ENCODE measurements at regions of chr20 and their contacts with region 1.

Region 1: GRCh38 chr20:33653218-33653899 is 8.8 kb upstream of the C20orf144 start:
- DNase-seq: peak; percentile 88
- H3K4me3 ChIP-seq: peak overlapping the region in 1 of 2 experiments; percentile 23; a peak in 1 of 4 replicates
- H3K27ac ChIP-seq: peak overlapping the region in 1 of 2 experiments; percentile 17; a peak in 1 of 4 replicates
- H3K4me1 ChIP-seq: peaks cover 1 to 39% of the 10 kb centered on the region in 2 experiments; a peak in 2 of 4 replicates
- H3K27me3 ChIP-seq: no peaks in the 10 kb centered on the region
- CTCF ChIP-seq: peak; percentile 82
- EP300 ChIP-seq: no peak
- RAD21 ChIP-seq: peak; percentile 96

Region 2: GRCh38 chr20:33450867-33451266 is 202.5 kb before region 1 on chr20:
- CTCF ChIA-PET with region 1: interaction called, 25 read pairs
- POLR2A ChIA-PET with region 1: interaction called, 3 read pairs
- DNase-seq: no peak
- H3K4me3 ChIP-seq: no peak overlapping the region
- H3K27ac ChIP-seq: no peak overlapping the region
- H3K4me1 ChIP-seq: no peaks in the 10 kb centered on the region; a peak in 1 of 4 replicates
- H3K27me3 ChIP-seq: no peaks in the 10 kb centered on the region
- CTCF ChIP-seq: no peak
- EP300 ChIP-seq: no peak
- RAD21 ChIP-seq: no peak

Region 3: DNA sequence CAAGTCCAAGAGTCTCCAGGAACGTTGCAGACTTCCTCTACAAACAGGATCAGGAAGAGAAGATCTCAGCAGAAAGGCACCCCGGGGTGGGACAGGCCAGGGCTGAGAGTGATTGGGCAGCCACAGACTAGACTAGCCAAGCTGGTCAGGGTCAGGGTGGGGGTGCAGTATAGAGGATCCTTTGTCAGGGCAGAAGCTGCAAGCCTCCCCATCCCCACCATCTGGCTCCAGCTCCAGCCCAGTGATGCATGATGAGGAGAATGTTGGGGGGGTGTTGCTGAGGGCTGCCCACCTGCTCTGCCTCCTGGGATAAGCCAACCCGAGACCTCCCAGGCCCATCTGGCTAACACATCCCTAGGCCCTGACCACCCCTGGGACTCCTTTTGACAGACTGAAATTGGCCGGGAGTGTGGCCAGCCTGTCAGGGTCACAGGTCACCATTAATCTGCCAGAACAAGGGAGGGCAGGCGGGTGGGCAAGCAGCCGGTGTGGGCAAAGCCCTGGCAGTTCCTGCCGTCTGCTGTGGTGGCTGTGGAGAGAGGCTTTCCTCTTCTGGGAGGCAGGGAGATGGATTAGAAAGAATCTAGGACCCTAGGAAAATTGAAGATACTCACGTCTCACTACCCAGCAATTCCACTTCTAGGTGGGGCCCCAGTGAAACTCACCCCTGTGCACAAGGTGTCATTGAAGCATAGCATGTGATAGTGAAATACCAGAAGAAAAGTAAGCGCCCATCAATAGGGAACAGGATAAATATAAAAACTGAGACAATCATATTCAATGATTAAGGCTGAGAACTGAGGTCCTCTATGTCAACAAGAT is 187.7 kb before region 1 on chr20:
- CTCF ChIA-PET with region 1: interaction called, 24 read pairs
- POLR2A ChIA-PET with region 1: interaction called, 3 read pairs
- DNase-seq: no peak
- H3K4me3 ChIP-seq: no peak overlapping the region
- H3K27ac ChIP-seq: no peak overlapping the region
- H3K4me1 ChIP-seq: peaks cover 0 to 6% of the 10 kb centered on the region in 2 experiments; a peak in 1 of 4 replicates
- H3K27me3 ChIP-seq: no peaks in the 10 kb centered on the region
- CTCF ChIP-seq: no peak
- EP300 ChIP-seq: no peak
- RAD21 ChIP-seq: no peak

Region 4: GRCh38 chr20:33789109-33789854 is 135.9 kb after region 1 on chr20:
- CTCF ChIA-PET with region 1: no interaction called
- POLR2A ChIA-PET with region 1: no interaction called
- DNase-seq: peak; percentile 68
- H3K4me3 ChIP-seq: no peak overlapping the region
- H3K27ac ChIP-seq: peak overlapping the region; percentile 81 to 91
- H3K4me1 ChIP-seq: peaks cover 7 to 30% of the 10 kb centered on the region in 2 experiments; a peak in 2 of 4 replicates
- H3K27me3 ChIP-seq: no peaks in the 10 kb centered on the region
- CTCF ChIP-seq: no peak
- EP300 ChIP-seq: peak; percentile 63 to 84
- RAD21 ChIP-seq: no peak

Measured in SK-N-SH (cell line).